Cardiac septum (tissue), 1 donor: ENCODE measurements at regions of chr1 and their contacts with region 1.

Region 1: DNA sequence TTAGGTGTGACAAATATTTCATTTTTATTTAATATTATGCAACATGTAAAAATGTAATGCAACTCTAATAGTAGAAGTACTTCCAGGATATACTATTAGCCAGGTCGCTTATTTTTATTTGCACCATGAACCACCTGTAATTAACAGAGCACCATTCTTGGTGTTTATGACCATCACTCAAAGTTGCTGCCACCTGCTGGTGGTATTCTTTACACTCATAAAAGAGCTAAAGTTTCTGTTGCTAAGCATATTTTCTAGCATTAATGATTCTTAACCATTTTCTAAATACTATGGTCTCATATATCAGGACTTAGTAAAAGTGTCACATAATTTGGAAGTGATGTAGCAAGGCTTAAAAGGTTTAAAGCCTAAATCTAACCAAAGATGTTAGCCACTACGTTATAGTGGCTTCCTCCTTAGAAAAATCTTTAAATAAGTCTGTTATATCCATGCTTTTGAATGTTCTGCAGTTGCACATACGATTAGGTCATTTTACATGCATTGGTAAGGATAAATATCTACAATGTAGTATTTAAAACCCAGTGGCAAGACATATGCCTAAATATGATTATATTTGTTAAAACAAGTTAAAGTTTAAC is 244.5 kb downstream of the NEGR1 start:
- DNase-seq: no peak

Region 2: DNA sequence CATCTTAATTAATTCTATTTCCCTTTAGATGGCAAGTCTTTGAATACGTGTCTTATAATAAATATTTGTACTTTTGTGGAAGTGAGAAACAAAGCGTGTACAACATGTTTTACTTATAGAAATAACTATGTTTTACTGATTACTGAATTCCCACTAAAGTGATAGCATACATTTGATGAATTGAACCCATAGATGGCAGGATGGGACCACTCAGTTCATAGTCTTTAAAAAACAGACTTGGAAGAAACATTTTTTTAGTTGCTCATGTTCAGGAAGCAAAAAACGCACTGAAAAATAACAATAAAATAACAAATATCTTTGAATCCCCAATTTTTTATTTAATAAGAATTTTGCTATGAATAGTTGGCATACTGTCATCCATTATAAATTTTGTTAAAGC is 449.9 kb before region 1 on chr1:
- intact Hi-C with region 1: loop called (anchors 5 kb)
- DNase-seq: no peak